ENCODE measurements at regions of chr3 and their contacts with region 1.

Region 1: GRCh38 chr3:66407611-66408218 is 93.1 kb downstream of the LRIG1 start:
- DNase-seq: peak; percentile 78
- ATAC-seq: peak; percentile 90
- H3K4me3 Mint-ChIP-seq: no peak overlapping the region
- H3K27ac Mint-ChIP-seq: no peak overlapping the region
- H3K4me1 Mint-ChIP-seq: peaks cover 11% of the 10 kb centered on the region
- H3K27me3 Mint-ChIP-seq: no peaks in the 10 kb centered on the region

Region 2: DNA sequence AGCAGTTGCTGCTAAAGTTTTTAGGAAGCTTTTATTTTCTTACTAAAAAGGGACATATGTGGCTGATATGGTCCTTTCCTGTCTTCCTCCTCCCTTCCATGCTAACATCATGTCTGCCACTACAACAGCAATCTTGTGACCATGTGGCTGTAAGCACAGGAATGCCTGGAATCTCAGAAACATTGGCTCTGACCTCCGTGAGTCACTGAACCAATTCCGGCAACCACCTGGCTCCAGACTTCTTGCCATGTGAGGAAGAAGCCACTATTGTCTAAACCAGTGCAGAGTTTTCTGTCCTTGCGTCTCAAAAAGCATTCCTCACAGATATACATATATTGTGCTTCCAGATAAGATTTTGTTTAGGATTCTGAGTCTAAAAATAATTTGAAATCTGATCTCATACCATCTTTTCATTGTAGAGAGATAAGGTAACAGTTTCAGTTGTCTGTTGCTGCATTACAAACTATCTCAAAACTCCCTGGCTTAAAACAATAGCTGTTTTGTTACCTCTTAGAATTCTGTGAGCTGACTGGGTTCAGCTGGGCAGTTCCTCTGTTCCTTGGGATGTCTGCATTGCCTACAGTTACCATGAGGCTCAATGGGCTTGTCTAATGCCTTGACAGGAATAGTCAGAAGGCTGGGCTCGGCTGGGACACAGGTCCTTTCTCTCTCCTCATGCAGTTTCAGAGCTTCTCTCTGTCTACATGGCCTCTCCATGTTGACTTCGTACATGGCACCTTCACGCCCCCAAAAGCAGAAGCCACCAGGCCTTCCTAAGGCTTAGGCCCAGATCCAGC is 291.7 kb before region 1 on chr3:
- CTCF ChIA-PET with region 1: no interaction called
- POLR2A ChIA-PET with region 1: no interaction called
- DNase-seq: no peak
- ATAC-seq: no peak
- H3K4me3 Mint-ChIP-seq: no peak overlapping the region
- H3K27ac Mint-ChIP-seq: no peak overlapping the region
- H3K4me1 Mint-ChIP-seq: no peaks in the 10 kb centered on the region
- H3K27me3 Mint-ChIP-seq: no peaks in the 10 kb centered on the region

Region 3: GRCh38 chr3:66394019-66394752 is 13.5 kb before region 1 on chr3:
- CTCF ChIA-PET with region 1: interaction called, 18 read pairs
- POLR2A ChIA-PET with region 1: interaction called, 3 read pairs
- DNase-seq: peak; percentile 77
- ATAC-seq: peak; percentile 93
- H3K4me3 Mint-ChIP-seq: peak overlapping the region; percentile 67
- H3K27ac Mint-ChIP-seq: peak overlapping the region; percentile 90
- H3K4me1 Mint-ChIP-seq: peaks cover 30% of the 10 kb centered on the region
- H3K27me3 Mint-ChIP-seq: no peaks in the 10 kb centered on the region

Region 4: GRCh38 chr3:66490214-66490613 is 82.5 kb after region 1 on chr3:
- CTCF ChIA-PET with region 1: interaction called, 25 read pairs
- POLR2A ChIA-PET with region 1: no interaction called
- DNase-seq: peak; percentile 48
- ATAC-seq: peak; percentile 64
- H3K4me3 Mint-ChIP-seq: peak overlapping the region; percentile 47
- H3K27ac Mint-ChIP-seq: peak overlapping the region; percentile 62
- H3K4me1 Mint-ChIP-seq: peaks cover 83% of the 10 kb centered on the region
- H3K27me3 Mint-ChIP-seq: peaks cover 3% of the 10 kb centered on the region

Region 5: GRCh38 chr3:66816090-66816761 is 408.5 kb after region 1 on chr3:
- CTCF ChIA-PET with region 1: interaction called, 27 read pairs
- POLR2A ChIA-PET with region 1: no interaction called
- DNase-seq: peak; percentile 23
- ATAC-seq: peak; percentile 67
- H3K4me3 Mint-ChIP-seq: no peak overlapping the region
- H3K27ac Mint-ChIP-seq: no peak overlapping the region
- H3K4me1 Mint-ChIP-seq: no peaks in the 10 kb centered on the region
- H3K27me3 Mint-ChIP-seq: peaks cover 11% of the 10 kb centered on the region

Region 6: DNA sequence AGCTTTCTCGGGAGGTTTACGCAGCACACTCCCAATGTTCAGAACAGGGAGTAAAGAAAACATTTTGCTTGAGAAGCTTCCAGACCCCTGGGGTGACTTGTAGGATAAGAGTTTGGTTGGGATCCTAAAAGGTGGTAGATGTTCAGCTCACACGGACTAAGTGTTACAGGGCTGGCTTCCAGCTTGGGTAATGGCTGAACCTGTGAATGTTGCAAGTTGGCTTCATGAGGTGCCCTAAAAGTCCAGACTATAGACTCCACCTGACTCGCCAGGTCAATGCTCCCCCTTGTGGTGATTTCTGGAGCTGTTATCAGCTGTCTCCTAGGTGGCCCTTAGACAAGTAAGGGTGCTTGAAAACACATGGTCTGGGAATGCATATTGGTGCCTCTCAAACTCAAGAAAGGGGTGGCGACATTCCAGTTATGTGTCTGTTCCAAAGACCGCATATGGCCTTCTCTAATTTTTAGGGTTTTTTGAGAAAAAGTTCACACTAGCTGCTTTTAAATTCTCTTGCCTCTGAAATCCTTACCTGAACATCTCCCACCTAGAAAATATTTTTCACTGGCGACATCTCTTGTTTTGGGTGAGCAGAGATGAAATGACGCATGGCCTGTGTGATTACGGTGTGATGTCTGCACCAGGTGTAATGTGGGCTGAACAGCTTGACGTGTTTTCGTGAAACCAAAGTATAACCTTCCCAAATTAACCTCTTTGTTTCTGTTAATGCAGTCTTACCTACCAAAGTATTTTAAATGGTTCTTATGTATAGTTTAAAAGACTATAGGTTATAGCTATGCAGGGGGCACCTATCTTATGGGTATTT is 414.7 kb after region 1 on chr3:
- CTCF ChIA-PET with region 1: interaction called, 27 read pairs
- POLR2A ChIA-PET with region 1: no interaction called
- DNase-seq: peak; percentile 75
- ATAC-seq: peak; percentile 75
- H3K4me3 Mint-ChIP-seq: no peak overlapping the region
- H3K27ac Mint-ChIP-seq: no peak overlapping the region
- H3K4me1 Mint-ChIP-seq: no peaks in the 10 kb centered on the region
- H3K27me3 Mint-ChIP-seq: peaks cover 10% of the 10 kb centered on the region

Measured in activated CD8-positive, alpha-beta T cell treated with anti-CD3 and anti-CD28 coated beads, Interleukin-2, amount 10 ng/mL, durations not matched to agents 7 days and 5 days (primary cell).